ENCODE measurements at regions of chr4 and their contacts with region 1.

Region 1: GRCh38 chr4:42519803-42520417 is 122.6 kb downstream of the SHISA3 start:
- DNase-seq: peak; percentile 71
- H3K4me3 Mint-ChIP-seq: no peak overlapping the region
- H3K27ac Mint-ChIP-seq: no peak overlapping the region
- H3K4me1 Mint-ChIP-seq: no peaks in the 10 kb centered on the region
- H3K27me3 Mint-ChIP-seq: no peaks in the 10 kb centered on the region

Region 2: GRCh38 chr4:42371306-42372252 is 148.3 kb before region 1 on chr4:
- CTCF ChIA-PET with region 1: interaction called, 43 read pairs
- intact Hi-C with region 1: loop called (anchors 1 kb)
- DNase-seq: peak; percentile 17
- H3K4me3 Mint-ChIP-seq: no peak overlapping the region
- H3K27ac Mint-ChIP-seq: no peak overlapping the region
- H3K4me1 Mint-ChIP-seq: no peaks in the 10 kb centered on the region
- H3K27me3 Mint-ChIP-seq: peaks cover 18% of the 10 kb centered on the region

Region 3: GRCh38 chr4:42436928-42437565 is 82.9 kb before region 1 on chr4:
- CTCF ChIA-PET with region 1: no interaction called
- intact Hi-C with region 1: no loop called
- DNase-seq: no peak
- H3K4me3 Mint-ChIP-seq: no peak overlapping the region
- H3K27ac Mint-ChIP-seq: no peak overlapping the region
- H3K4me1 Mint-ChIP-seq: no peaks in the 10 kb centered on the region
- H3K27me3 Mint-ChIP-seq: no peaks in the 10 kb centered on the region

Region 4: DNA sequence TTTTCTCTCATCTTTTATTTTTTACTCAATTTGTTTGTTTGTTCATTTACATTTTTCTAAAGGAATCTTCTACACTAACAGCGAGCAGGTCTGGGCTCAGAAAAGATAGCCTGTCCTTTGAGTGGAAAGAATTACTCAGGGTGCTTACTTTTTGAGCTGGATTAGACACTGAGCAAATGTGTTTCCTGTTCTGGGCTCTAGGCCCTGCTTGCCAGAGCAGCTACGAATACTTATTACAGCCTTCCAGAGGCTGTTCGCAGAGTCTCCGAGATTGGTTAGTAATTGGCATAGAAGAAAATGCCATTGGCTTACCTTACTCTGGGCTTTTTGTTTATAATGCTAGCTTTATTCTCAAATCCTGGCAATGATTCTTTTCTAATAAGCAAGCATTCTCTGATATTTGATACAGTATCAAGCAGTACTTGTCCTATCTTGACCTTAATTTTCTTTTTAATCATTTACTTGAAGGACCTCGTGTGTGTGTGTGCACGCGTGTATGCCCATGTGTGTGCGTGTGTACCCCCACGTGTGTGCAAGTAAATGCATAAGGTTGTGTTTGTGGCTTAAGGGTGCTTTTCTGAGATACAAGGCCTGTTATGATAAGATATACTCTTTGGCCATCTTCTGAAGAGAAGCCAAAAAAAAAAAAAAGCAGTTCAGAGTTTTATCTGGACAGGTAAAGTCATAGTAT is 296.4 kb after region 1 on chr4:
- CTCF ChIA-PET with region 1: no interaction called
- intact Hi-C with region 1: loop called (anchors 5 kb)
- DNase-seq: no peak
- H3K4me3 Mint-ChIP-seq: no peak overlapping the region
- H3K27ac Mint-ChIP-seq: no peak overlapping the region
- H3K4me1 Mint-ChIP-seq: peaks cover 2% of the 10 kb centered on the region
- H3K27me3 Mint-ChIP-seq: peaks cover 2% of the 10 kb centered on the region